Right cardiac atrium (tissue), 5 donors: ENCODE measurements at regions of chr4 and their contacts with region 1.

Region 1: GRCh38 chr4:26985873-26986272 is 125.2 kb downstream of the STIM2 start:
- DNase-seq: no peak
- ATAC-seq: no peak
- H3K4me3 ChIP-seq: no peak overlapping the region
- H3K27ac ChIP-seq: no peak overlapping the region
- H3K4me1 ChIP-seq: peaks cover 2% of the 10 kb centered on the region
- H3K27me3 ChIP-seq: no peaks in the 10 kb centered on the region

Region 2: GRCh38 chr4:26459054-26459755 is 526.7 kb before region 1 on chr4:
- intact Hi-C with region 1: no loop called
- DNase-seq: no peak
- ATAC-seq: peak; percentile 59 to 61
- H3K4me3 ChIP-seq: no peak overlapping the region
- H3K27ac ChIP-seq: no peak overlapping the region
- H3K4me1 ChIP-seq: no peaks in the 10 kb centered on the region
- H3K27me3 ChIP-seq: no peaks in the 10 kb centered on the region

Region 3: GRCh38 chr4:26873391-26874026 is 112.4 kb before region 1 on chr4:
- intact Hi-C with region 1: loop called in 2 of 4 experiments (anchors 10 kb)
- DNase-seq: peak in 1 of 3 donors; percentile 36
- ATAC-seq: peak; percentile 39 to 52
- H3K4me3 ChIP-seq: no peak overlapping the region
- H3K27ac ChIP-seq: no peak overlapping the region
- H3K4me1 ChIP-seq: no peaks in the 10 kb centered on the region
- H3K27me3 ChIP-seq: no peaks in the 10 kb centered on the region

Region 4: GRCh38 chr4:27078934-27079455 is 93.1 kb after region 1 on chr4:
- intact Hi-C with region 1: no loop called
- DNase-seq: no peak
- ATAC-seq: no peak
- H3K4me3 ChIP-seq: no peak overlapping the region
- H3K27ac ChIP-seq: no peak overlapping the region
- H3K4me1 ChIP-seq: no peaks in the 10 kb centered on the region
- H3K27me3 ChIP-seq: peaks cover 3% of the 10 kb centered on the region